Mammary epithelial cell (primary cell): ENCODE measurements at regions of chr11 and their contacts with region 1.

Region 1: GRCh38 chr11:100876815-100877520 is 189.9 kb downstream of the ARHGAP42 start:
- DNase-seq: peak; percentile 82
- H3K4me3 ChIP-seq: no peak overlapping the region
- H3K27ac ChIP-seq: peak overlapping the region; percentile 16
- H3K4me1 ChIP-seq: peaks cover 9% of the 10 kb centered on the region
- H3K27me3 ChIP-seq: no peaks in the 10 kb centered on the region
- CTCF ChIP-seq: no peak

Region 2: DNA sequence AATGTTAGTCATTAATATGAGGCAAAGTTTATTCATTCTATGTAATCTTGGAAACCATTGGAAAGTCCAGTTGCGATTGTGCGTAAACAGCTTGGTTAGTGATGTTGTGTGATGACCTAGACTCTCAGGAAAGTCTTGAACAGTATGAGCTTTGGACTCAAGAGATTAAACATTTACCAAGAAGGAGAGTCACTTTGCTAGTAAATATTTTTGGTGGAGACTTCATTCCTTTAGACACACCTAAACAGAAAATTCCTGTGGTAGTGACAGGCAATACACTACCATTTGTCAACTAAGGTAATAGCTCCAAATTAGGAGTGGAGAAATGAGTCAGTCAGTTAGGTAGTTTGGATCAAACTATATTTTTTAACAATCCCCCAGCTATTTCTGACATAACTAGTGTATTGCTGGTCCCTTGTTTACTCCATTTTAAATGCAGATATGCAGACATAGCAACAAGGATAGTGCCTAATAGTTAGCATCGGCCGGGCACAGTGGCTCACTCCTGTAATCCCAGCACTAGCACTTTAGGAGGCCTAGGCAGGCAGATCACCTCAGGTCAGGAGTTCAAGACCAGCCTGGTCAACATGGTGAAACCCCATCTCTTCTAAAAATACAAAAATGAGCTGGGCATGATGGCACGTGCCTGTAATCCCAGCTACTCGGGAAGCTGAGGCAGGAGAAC is 100.6 kb before region 1 on chr11:
- CTCF ChIA-PET with region 1: no interaction called
- dilution Hi-C with region 1: no loop called
- in situ Hi-C with region 1: no loop called
- intact Hi-C with region 1: no loop called
- DNase-seq: peak; percentile 90
- H3K4me3 ChIP-seq: no peak overlapping the region
- H3K27ac ChIP-seq: peak overlapping the region; percentile 87
- H3K4me1 ChIP-seq: peaks cover 26% of the 10 kb centered on the region
- H3K27me3 ChIP-seq: no peaks in the 10 kb centered on the region
- CTCF ChIP-seq: no peak

Region 3: GRCh38 chr11:100827934-100828661 is 48.9 kb before region 1 on chr11:
- CTCF ChIA-PET with region 1: no interaction called
- dilution Hi-C with region 1: no loop called
- in situ Hi-C with region 1: no loop called
- intact Hi-C with region 1: no loop called
- DNase-seq: peak; percentile 57
- H3K4me3 ChIP-seq: no peak overlapping the region
- H3K27ac ChIP-seq: no peak overlapping the region
- H3K4me1 ChIP-seq: peaks cover 28% of the 10 kb centered on the region
- H3K27me3 ChIP-seq: no peaks in the 10 kb centered on the region
- CTCF ChIP-seq: peak; percentile 27 to 36

Region 4: GRCh38 chr11:100930185-100930778 is 53.3 kb after region 1 on chr11:
- CTCF ChIA-PET with region 1: no interaction called
- dilution Hi-C with region 1: no loop called
- in situ Hi-C with region 1: no loop called
- intact Hi-C with region 1: loop called (anchors 5 kb)
- DNase-seq: peak; percentile 50
- H3K4me3 ChIP-seq: no peak overlapping the region
- H3K27ac ChIP-seq: peak overlapping the region; percentile 58
- H3K4me1 ChIP-seq: peaks cover 17% of the 10 kb centered on the region
- H3K27me3 ChIP-seq: no peaks in the 10 kb centered on the region
- CTCF ChIP-seq: peak; percentile 61 to 64